Transverse colon (tissue), 4 donors: ENCODE measurements at regions of chr9 and their contacts with region 1.

Region 1: DNA sequence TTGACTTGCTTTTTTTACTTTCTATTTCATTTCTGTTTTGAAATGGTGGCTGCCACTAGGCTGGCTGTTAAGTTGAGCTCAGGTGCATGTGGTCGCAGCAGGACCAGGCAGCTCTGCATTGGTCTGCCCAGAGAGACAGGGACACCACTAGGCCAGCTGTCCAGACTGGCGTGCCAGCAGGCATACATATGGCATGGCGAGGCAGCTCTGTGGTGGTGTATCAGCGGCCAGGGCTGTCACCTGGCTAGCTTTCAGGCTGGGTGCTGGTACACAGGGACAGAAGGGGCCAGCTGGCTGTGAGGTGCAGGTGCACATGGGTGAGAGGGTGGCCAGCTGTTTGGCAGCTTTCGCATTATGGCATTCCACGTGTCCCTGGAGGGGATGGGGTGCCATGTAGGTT is 654.0 kb upstream of the ACO1 start:
- DNase-seq: no peak
- H3K4me3 ChIP-seq: no peak overlapping the region
- H3K27ac ChIP-seq: no peak overlapping the region
- H3K4me1 ChIP-seq: no peaks in the 10 kb centered on the region
- H3K27me3 ChIP-seq: no peaks in the 10 kb centered on the region
- CTCF ChIP-seq: no peak
- EP300 ChIP-seq: no peak
- POLR2A ChIP-seq: no peak

Region 2: GRCh38 chr9:31715250-31715649 is 15.1 kb before region 1 on chr9:
- in situ Hi-C with region 1: no loop called
- intact Hi-C with region 1: loop called (anchors 1 kb)
- DNase-seq: no peak
- H3K4me3 ChIP-seq: no peak overlapping the region
- H3K27ac ChIP-seq: no peak overlapping the region
- H3K4me1 ChIP-seq: no peaks in the 10 kb centered on the region
- H3K27me3 ChIP-seq: no peaks in the 10 kb centered on the region
- CTCF ChIP-seq: no peak
- EP300 ChIP-seq: no peak
- POLR2A ChIP-seq: no peak